ENCODE measurements at regions of chr1 and their contacts with region 1.

Region 1: GRCh38 chr1:46036894-46037839 is 95.3 kb downstream of the PIK3R3 start:
- DNase-seq: peak; percentile 83 to 91 (median 86)
- ATAC-seq: peak; percentile 82
- H3K4me3 ChIP-seq: no peak overlapping the region
- H3K27ac ChIP-seq: no peak overlapping the region
- H3K4me1 ChIP-seq: peaks cover 5% of the 10 kb centered on the region
- H3K27me3 ChIP-seq: no peaks in the 10 kb centered on the region
- CTCF ChIP-seq: peak; percentile 96 to 98 (median 96)
- POLR2A ChIP-seq: no peak

Region 2: DNA sequence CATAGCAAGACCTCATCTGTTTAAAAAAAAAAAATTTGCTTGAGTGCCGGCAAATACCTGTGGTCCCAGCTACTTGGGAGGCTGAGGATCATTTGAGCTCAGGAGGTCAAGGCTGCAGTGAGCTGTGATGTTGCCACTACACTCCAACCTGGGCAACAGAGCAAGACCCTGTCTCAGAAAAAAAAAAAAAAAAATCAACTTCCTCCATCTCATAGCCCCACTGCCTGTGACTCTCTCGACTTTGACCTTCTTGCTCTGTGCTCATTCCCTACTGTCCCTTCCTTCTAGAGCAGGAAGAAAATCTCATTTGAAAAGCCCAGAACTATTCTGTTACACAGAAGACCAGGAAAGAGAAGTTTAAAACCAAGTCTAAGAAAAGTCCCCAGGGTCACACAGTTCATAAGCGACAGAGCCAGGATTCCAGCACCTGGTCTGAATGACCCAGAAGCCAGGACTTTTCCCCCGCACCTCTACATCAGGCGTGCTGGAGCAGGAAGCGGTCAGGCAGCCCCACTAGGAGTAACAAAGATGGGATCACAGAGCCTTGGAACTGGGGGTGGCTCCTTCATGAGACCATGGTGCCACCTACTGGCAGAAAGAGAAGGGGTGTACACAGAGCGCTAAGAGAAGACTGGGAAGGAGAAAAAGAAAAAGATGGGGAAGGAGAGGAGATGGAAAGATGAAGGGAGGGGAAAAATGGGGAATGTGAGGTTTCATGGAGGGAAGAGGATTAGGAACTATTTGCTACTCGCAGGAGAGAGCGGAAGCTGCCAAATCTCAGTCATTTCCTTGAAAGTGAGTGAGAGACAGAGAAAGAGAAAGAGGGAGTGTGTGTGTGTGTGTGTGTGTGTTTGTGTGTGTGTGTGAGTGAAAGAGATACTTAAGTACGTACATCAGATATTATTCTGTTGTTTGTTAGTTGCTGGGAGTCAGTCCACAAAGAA is 142.2 kb after region 1 on chr1:
- intact Hi-C with region 1: loop called (anchors 5 kb)
- DNase-seq: peak; percentile 81 to 89 (median 86)
- ATAC-seq: peak; percentile 57
- H3K4me3 ChIP-seq: no peak overlapping the region
- H3K27ac ChIP-seq: peak overlapping the region in 1 of 4 donors; percentile 34
- H3K4me1 ChIP-seq: peaks cover 22% of the 10 kb centered on the region
- H3K27me3 ChIP-seq: no peaks in the 10 kb centered on the region
- CTCF ChIP-seq: peak; percentile 65 to 99 (median 93)
- POLR2A ChIP-seq: no peak

Region 3: DNA sequence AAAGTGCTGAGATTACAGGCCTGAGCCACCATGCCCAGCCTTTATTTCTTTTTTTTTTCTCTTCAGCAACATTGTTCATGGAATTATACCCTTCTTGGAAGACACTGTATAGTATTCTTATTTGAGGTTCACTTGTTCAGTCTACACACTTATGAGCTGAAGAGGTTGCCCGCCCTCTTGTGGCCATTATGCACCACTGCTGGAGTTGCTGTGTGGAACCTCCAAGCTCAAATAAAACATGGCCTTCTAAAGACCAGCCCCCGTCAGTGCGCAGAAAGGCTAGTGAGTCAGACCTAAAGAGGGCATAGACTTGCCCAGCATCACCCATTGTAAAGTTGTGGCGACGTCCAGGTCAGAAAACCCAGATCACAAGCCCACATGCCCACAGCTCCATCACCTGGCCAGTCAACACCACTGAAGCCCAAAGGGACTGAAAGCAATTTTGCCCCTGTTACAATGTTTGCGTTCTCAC is 186.3 kb after region 1 on chr1:
- intact Hi-C with region 1: loop called (anchors 5 kb)
- DNase-seq: peak; percentile 72 to 83 (median 80)
- ATAC-seq: peak; percentile 93
- H3K4me3 ChIP-seq: no peak overlapping the region
- H3K27ac ChIP-seq: no peak overlapping the region
- H3K4me1 ChIP-seq: no peaks in the 10 kb centered on the region
- H3K27me3 ChIP-seq: no peaks in the 10 kb centered on the region
- CTCF ChIP-seq: peak; percentile 85 to 92 (median 89)
- POLR2A ChIP-seq: no peak